ENCODE measurements at regions of chr10 and their contacts with region 1.

Region 1: DNA sequence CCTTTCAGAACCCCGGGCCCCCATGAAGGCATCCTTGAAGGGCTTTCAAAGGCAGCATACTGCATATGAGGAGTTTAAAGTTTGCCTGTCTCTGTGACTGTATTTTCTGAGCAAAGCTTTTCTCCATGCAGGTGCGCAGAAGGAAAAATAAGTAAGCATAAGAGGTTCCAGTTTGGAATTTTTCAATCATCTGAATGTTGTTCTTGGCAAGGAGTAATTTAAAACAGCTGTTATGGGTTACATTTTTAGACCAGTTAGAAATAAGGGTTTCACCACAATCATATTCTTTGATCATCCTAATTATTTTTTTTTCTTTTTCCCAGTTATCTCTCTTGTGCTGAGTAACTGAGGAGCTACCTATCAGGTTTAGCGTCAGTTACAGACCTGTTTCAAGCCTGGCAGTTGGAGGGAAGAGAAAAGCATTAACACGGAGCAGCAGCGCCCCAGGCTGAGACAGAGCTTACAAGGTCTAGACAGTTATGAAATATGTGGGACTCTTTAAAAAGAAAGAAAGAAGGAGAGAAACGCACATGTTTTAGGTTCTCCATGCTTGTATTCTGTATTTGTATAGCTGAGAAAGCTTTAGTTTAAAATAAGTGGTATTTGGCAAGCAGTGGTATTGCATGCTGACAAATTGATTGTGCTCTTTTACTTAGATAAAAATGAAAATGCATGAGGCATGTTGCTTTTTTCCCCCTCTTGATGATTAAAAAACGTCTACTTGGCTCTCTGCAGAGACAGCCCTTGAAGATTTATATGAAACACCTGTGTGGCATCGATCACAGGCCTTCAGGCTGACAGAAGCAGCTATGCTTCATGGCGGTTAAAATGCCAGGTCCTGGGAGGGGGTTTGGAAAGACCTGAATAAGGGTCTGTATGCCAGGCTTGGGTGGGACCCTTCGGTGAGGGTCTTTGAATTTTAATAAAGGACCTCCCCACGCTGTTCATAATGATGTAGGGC is 157.6 kb downstream of the GRK5 start:
- DNase-seq: no peak
- H3K4me3 ChIP-seq: no peak overlapping the region
- H3K27ac ChIP-seq: no peak overlapping the region
- H3K4me1 ChIP-seq: peaks cover 0 to 2% of the 10 kb centered on the region in 2 donors
- H3K27me3 ChIP-seq: no peaks in the 10 kb centered on the region
- CTCF ChIP-seq: no peak
- POLR2A ChIP-seq: no peak

Region 2: DNA sequence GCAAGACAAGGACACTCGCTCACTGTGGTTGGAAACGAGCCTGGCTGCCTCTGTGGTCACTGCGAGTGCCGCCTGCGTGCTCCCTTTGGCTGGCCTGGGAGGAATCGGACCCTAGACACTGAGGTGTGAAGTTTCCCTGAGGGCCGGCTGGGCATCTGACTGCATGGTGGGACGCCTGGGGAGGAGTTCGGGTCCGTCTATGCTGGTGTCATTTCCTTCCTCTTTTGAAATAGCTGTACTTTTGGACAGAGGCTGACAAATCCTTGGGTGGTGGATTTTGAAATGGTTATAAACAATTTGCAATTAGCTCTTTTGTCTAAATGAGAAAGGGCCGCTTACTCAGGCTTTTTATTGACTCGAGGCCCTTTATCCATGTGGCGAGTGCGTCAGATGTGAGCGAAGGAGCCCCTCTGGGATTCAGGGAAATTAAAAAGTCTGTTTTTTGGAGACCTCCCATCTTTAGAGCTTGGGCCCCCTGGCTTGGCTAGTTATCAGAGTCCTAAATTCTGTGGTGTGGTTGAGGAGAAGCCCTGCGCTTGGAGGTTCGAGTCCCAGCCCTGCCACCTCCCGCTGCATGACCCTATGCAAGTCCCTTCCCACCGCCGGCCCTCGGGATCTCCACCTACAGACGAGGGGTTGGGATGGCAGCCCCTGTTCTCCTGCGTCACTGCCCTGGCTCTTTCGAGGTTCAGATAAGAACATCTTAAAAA is 30.5 kb after region 1 on chr10:
- intact Hi-C with region 1: loop called (anchors 1 kb)
- DNase-seq: no peak
- H3K4me3 ChIP-seq: no peak overlapping the region
- H3K27ac ChIP-seq: peak overlapping the region; percentile 29 to 71
- H3K4me1 ChIP-seq: no peaks in the 10 kb centered on the region
- H3K27me3 ChIP-seq: no peaks in the 10 kb centered on the region
- CTCF ChIP-seq: no peak
- POLR2A ChIP-seq: no peak